ENCODE measurements at regions of chr5 and their contacts with region 1.

Region 1: GRCh38 chr5:149153751-149154610 is 12.7 kb downstream of the ABLIM3 start:
- DNase-seq: peak; percentile 87
- H3K4me3 Mint-ChIP-seq: peak overlapping the region; percentile 3
- H3K27ac Mint-ChIP-seq: peak overlapping the region; percentile 81
- H3K4me1 Mint-ChIP-seq: peaks cover 61% of the 10 kb centered on the region
- H3K27me3 Mint-ChIP-seq: no peaks in the 10 kb centered on the region
- CTCF ChIP-seq: no peak

Region 2: DNA sequence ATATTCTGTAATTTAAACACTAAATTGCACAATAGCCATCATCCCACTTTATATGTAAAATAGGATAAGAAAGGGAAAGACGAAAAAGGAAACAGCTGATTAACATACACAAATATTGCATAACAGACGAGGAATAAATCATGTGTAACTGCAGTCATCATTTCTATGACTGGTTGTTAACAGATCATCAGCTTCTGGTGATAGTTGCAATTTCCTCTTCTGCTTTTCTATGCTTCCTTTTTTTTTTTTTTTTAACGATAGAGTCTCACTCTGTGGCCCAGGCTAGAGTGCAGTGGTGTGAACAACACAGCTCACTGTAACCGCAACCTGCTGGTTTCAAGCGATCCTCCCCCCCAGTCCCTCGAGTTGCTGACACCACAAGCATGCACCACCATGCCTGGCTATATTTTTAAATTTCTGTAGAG is 1348.9 kb before region 1 on chr5:
- CTCF ChIA-PET with region 1: no interaction called
- POLR2A ChIA-PET with region 1: no interaction called
- intact Hi-C with region 1: no loop called
- DNase-seq: peak; percentile 59
- H3K4me3 Mint-ChIP-seq: no peak overlapping the region
- H3K27ac Mint-ChIP-seq: no peak overlapping the region
- H3K4me1 Mint-ChIP-seq: peaks cover 6% of the 10 kb centered on the region
- H3K27me3 Mint-ChIP-seq: peaks cover 31% of the 10 kb centered on the region
- CTCF ChIP-seq: no peak

Region 3: GRCh38 chr5:149133795-149134780 is 19.9 kb before region 1 on chr5:
- CTCF ChIA-PET with region 1: interaction called, 63 read pairs
- POLR2A ChIA-PET with region 1: interaction called, 71 read pairs
- intact Hi-C with region 1: loop called (anchors 1 kb)
- DNase-seq: peak; percentile 99
- H3K4me3 Mint-ChIP-seq: peak overlapping the region; percentile 33
- H3K27ac Mint-ChIP-seq: peak overlapping the region; percentile 88
- H3K4me1 Mint-ChIP-seq: peaks cover 70% of the 10 kb centered on the region
- H3K27me3 Mint-ChIP-seq: no peaks in the 10 kb centered on the region
- CTCF ChIP-seq: no peak

Measured in MCF 10A (cell line).